ENCODE measurements at regions of chr2 and their contacts with region 1.

Region 1: DNA sequence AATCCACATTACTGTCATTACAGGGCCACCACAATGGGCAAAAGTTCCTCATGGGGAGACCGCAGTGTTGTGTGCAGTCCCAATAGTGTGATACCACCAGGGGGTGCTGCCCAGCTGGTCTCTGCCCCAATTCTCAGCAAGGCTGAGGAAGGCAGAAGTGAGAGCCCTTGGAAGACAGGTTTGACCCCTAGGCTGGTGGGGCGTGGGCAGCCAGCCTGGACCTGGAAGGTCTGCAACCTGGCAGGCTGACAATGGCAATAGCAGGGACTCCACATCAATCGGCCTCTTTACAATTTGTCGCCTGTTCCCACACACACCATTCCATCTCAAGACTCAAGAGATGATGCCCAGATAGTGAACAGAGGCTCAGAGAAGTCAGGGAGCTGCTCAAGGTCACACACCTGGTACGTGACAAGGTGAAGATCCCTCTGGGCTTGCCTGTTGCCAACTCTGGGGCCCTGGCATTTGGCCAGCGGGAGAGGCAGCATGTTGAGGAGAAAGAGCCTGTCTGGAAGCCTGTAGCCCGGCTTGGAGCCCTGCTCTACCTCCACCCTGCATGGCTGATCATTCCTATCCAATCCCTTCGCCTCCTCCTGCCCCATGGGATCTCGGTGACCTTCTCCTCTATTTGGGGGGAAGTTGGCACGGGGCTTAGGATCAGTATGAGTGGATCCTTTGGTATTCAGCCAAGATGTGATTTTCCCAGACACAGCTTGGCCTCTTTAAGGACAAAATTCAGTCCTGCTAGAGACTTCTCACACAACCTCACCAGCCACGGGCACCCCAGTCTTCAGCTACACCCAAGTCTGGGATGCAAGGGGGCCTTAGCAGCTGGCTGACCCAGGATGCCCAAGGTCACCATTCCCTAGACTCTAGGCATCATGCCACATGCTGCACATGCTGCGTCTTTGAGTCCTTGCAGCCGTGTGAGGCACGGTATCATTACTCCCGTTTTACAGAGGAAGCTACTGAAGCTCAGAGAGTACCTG is 2.9 kb upstream of the ATOH8 start:
- DNase-seq: peak; percentile 72 to 87
- ATAC-seq: peak; percentile 35 to 76; a peak in 5 of 6 replicates
- H3K4me3 ChIP-seq: no peak overlapping the region
- H3K27ac ChIP-seq: peak overlapping the region; percentile 29 to 61; a peak in 5 of 6 replicates
- H3K4me1 ChIP-seq: peaks cover 41% of the 10 kb centered on the region
- CTCF ChIP-seq: peak; percentile 89
- EP300 ChIP-seq: no peak
- POLR2A ChIP-seq: no peak
- RAD21 ChIP-seq: peak; percentile 90 to 95

Region 2: DNA sequence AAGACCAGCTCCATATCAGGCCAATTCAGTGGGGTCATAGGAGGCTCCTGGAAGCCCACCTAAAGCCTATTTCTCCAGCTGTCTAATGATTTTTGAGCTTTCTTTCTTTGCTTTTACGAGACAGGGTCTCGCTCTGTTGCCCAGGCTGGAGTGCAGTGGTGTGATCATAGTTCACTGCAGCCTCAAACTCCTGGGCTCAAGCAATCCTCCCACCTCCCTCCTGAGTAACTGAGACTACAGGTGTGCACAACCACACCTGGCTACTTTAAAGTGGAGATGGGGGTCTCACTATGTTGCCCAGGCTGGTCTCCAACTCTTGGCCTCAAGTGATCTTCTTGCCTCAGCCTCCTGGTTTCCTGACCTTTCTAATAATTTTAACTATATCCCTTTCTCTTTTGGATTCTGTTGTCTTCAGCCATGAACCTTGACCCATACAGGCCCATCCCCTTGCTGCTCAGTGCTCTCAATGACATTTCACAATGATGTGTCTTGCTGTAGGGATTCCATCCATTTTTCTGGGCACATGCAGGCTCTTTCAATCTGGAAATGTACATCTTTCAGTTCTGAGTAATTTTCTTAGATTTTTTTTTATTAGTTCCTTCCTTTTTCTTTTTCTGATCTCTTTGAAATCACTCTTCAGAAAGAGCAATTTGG is 27.0 kb before region 1 on chr2:
- CTCF ChIA-PET with region 1: interaction called, 177 read pairs
- POLR2A ChIA-PET with region 1: no interaction called
- DNase-seq: no peak
- ATAC-seq: no peak
- H3K4me3 ChIP-seq: no peak overlapping the region
- H3K27ac ChIP-seq: no peak overlapping the region; a peak in 1 of 6 replicates
- H3K4me1 ChIP-seq: peaks cover 12% of the 10 kb centered on the region
- CTCF ChIP-seq: no peak
- EP300 ChIP-seq: no peak
- POLR2A ChIP-seq: no peak
- RAD21 ChIP-seq: no peak

Region 3: GRCh38 chr2:85772019-85772745 is 21.3 kb after region 1 on chr2:
- CTCF ChIA-PET with region 1: interaction called, 159 read pairs
- POLR2A ChIA-PET with region 1: interaction called, 9 read pairs
- DNase-seq: peak; percentile 90
- ATAC-seq: peak; percentile 85 to 87
- H3K4me3 ChIP-seq: peak overlapping the region; percentile 13; the same call in 1 of the 3 replicates
- H3K27ac ChIP-seq: peak overlapping the region; percentile 82 to 88
- H3K4me1 ChIP-seq: peaks cover 66% of the 10 kb centered on the region
- CTCF ChIP-seq: peak; percentile 38; the same call in 2 of the 3 replicates
- EP300 ChIP-seq: peak in 1 of 2 experiments; percentile 83; a peak in 2 of 5 replicates
- POLR2A ChIP-seq: no peak
- RAD21 ChIP-seq: peak; percentile 51 to 63

Region 4: GRCh38 chr2:85792783-85793441 is 42.0 kb after region 1 on chr2:
- CTCF ChIA-PET with region 1: interaction called, 52 read pairs
- POLR2A ChIA-PET with region 1: no interaction called
- DNase-seq: peak; percentile 38 to 48
- ATAC-seq: peak in 1 of 2 experiments; percentile 2; a peak in 1 of 6 replicates
- H3K4me3 ChIP-seq: no peak overlapping the region
- H3K27ac ChIP-seq: peak overlapping the region; percentile 10 to 79; a peak in 5 of 6 replicates
- H3K4me1 ChIP-seq: peaks cover 44% of the 10 kb centered on the region
- CTCF ChIP-seq: no peak
- EP300 ChIP-seq: no peak
- POLR2A ChIP-seq: no peak
- RAD21 ChIP-seq: no peak

Region 5: GRCh38 chr2:85843543-85843942 is 92.7 kb after region 1 on chr2:
- CTCF ChIA-PET with region 1: interaction called, 10 read pairs
- POLR2A ChIA-PET with region 1: no interaction called
- DNase-seq: peak; percentile 50 to 52
- ATAC-seq: peak in 1 of 2 experiments; percentile 49; a peak in 1 of 6 replicates
- H3K4me3 ChIP-seq: no peak overlapping the region
- H3K27ac ChIP-seq: no peak overlapping the region
- H3K4me1 ChIP-seq: no peaks in the 10 kb centered on the region
- CTCF ChIP-seq: peak; percentile 42
- EP300 ChIP-seq: no peak
- POLR2A ChIP-seq: no peak
- RAD21 ChIP-seq: peak in 1 of 2 experiments; percentile 31; a peak in 1 of 5 replicates